Dorsolateral prefrontal cortex (tissue), 120 donors: ENCODE measurements at regions of chr18 and their contacts with region 1.

Region 1: DNA sequence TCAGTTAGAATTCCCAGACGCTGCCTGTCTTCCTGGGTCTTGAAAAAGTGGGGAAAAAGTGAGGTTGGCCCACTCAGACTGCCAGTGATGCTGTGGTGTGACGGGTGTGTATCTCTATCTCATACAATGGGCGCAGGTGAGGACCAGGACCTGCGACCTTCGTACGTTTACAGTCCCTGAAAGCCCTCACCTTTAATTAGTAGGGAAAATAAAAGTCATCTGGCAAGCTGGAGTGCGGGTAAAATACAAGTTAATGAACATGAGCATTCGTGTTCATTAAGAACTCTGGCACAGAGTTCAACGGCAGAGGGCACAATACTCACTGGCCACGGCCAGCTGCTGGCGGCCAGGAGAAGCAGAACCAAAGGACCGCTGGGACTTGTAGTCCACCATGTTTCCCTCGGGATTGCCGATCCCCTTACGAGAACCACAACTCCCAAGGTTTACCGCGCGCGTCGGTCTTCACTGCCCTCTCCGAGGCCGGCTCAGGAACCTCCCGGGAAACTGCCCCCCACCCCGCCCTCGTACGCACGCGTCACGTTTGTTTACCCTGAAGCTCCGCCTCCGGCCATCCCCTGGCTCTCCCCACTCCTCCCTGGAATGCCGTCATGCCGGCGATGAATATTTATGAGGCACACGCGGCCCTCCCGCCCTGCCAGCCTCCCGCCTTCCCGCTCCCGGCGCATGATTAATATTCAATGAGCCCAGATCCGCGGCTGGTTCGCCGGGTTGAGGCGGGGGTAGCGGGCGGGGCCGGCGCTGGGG is 488 bp upstream of the PHLPP1 start:
- DNase-seq: peak; percentile 99 to 100 (median 100)
- H3K4me3 ChIP-seq: peak overlapping the region; percentile 39 to 91 (median 72)
- H3K27ac ChIP-seq: peak overlapping the region; percentile 77 to 98 (median 93)
- H3K27me3 ChIP-seq: no peaks in the 10 kb centered on the region
- CTCF ChIP-seq: peak; percentile 71 to 98 (median 90)

Region 2: GRCh38 chr18:62186774-62187542 is 527.9 kb before region 1 on chr18 and contains the starts of genes PIGN and RELCH:
- intact Hi-C with region 1: loop called in 1 of 2 experiments (anchors 10 kb)
- DNase-seq: peak; percentile 82 to 98 (median 96)
- H3K4me3 ChIP-seq: peak within 1 kb of the TSS; percentile 67 to 100 (median 95)
- H3K27ac ChIP-seq: peak within 1 kb of the TSS in 58 of 59 donors; percentile 10 to 94 (median 84)
- H3K27me3 ChIP-seq: no peaks in the 10 kb centered on the region
- CTCF ChIP-seq: peak in 15 of 56 donors; percentile 4 to 33 (median 13)
- total RNA-seq, gene PIGN: 21.1 to 43.5 (median 31.0) TPM
- total RNA-seq, gene RELCH: 44.0 to 88.4 (median 63.7) TPM

Region 3: DNA sequence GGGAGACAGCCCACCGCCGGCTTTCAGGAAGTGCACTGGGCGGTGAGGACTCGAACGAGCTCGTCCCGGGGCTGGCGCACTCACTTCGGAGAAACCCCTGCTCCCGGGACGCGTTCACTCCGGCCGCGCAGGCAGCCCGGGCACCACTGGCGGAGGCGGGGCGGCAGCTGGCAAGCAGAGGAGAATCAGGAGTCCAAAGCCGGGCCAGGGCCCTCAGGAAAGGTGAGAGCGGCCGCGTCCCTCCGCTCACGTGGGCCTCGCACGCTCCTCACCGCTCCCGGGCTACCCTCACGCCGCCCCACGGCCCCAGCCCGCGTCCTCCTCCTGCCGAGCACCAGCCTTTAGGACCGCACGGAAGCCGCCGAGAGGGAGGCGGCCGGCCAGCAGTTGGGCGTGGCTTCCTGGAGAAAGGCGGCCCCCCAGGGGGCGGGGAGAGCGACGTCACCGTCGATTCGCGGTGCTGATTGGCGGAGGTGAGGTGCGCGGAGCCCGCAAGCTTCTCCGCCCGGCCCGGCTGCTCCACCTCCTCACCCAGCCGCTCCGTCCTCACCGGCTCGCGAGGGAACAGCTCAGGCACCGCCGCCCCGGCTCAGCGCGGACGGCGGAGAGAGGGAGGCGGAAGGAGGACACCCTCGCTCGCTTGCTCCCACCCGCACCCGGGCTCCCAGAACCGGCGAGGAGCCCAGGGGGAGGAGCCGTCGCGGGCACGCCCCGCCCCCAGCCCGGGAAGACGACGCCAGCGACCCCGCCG is 192.2 kb before region 1 on chr18 and contains the start of gene ZCCHC2:
- intact Hi-C with region 1: loop called (anchors 2 kb)
- DNase-seq: peak; percentile 96 to 100 (median 98)
- H3K4me3 ChIP-seq: peak within 1 kb of the TSS; percentile 70 to 98 (median 94)
- H3K27ac ChIP-seq: peak within 1 kb of the TSS; percentile 91 to 100 (median 98)
- H3K27me3 ChIP-seq: no peaks in the 10 kb centered on the region
- CTCF ChIP-seq: peak in 24 of 56 donors; percentile 0 to 53 (median 22)
- total RNA-seq, gene ZCCHC2: 26.3 to 65.9 (median 38.4) TPM

Region 4: GRCh38 chr18:62690236-62690815 is 24.5 kb before region 1 on chr18:
- intact Hi-C with region 1: loop called in 1 of 2 experiments (anchors 1 kb)
- DNase-seq: peak in 9 of 10 donors; percentile 61 to 91 (median 79)
- H3K4me3 ChIP-seq: peak overlapping the region in 49 of 59 donors; percentile 2 to 60 (median 31)
- H3K27ac ChIP-seq: peak overlapping the region; percentile 72 to 100 (median 96)
- H3K27me3 ChIP-seq: no peaks in the 10 kb centered on the region
- CTCF ChIP-seq: peak in 3 of 56 donors; percentile 11 to 22 (median 15)

Region 5: DNA sequence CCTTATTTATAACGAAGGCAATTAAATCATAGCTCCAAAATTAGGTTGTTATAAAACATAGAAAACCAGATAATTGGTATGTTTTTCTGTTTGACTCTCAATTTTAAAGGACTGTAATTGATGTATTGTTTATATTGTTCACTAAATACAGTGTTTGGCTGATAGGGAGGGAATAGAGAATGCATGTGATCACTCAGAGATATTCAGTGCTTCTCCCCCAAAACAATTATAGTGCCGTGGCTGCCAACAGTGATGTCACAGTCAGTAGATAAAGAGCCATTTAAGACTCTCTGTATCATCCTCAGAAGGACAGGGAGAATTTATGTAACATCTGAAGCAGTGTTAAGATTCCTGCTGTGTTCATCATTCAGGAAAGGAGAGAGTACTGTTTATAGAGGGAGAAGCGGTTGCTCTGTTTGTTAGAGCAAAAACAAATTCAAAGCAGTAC is 70.1 kb after region 1 on chr18:
- intact Hi-C with region 1: loop called in 1 of 2 experiments (anchors 1 kb)
- DNase-seq: peak in 5 of 10 donors; percentile 60 to 79 (median 67)
- H3K4me3 ChIP-seq: peak overlapping the region in 54 of 59 donors; percentile 1 to 58 (median 27)
- H3K27ac ChIP-seq: peak overlapping the region; percentile 70 to 97 (median 90)
- H3K27me3 ChIP-seq: no peaks in the 10 kb centered on the region
- CTCF ChIP-seq: no peak

Region 6: DNA sequence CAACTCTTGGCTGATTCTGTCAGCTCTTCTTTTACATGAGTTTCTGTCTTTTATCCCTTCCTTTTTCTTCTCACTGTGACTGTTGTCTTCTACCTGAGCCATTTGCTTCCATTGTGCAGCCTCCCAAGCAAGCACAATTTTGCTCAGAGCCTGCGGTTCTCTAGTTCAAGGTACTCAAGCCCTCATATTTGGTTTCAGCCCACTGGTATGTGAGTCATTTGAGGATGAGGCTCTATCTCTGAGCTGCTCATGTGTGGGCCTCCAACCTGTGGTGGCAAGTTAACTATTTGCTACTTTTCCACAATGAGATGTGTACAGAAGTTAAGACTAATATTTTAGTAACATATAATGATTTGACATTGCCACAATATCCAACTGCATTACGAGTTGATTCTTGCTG is 183.5 kb after region 1 on chr18:
- intact Hi-C with region 1: loop called in 1 of 2 experiments (anchors 5 kb)
- DNase-seq: no peak
- H3K4me3 ChIP-seq: no peak overlapping the region
- H3K27ac ChIP-seq: peak overlapping the region in 35 of 59 donors; percentile 3 to 97 (median 38)
- H3K27me3 ChIP-seq: no peaks in the 10 kb centered on the region
- CTCF ChIP-seq: no peak

Region 7: DNA sequence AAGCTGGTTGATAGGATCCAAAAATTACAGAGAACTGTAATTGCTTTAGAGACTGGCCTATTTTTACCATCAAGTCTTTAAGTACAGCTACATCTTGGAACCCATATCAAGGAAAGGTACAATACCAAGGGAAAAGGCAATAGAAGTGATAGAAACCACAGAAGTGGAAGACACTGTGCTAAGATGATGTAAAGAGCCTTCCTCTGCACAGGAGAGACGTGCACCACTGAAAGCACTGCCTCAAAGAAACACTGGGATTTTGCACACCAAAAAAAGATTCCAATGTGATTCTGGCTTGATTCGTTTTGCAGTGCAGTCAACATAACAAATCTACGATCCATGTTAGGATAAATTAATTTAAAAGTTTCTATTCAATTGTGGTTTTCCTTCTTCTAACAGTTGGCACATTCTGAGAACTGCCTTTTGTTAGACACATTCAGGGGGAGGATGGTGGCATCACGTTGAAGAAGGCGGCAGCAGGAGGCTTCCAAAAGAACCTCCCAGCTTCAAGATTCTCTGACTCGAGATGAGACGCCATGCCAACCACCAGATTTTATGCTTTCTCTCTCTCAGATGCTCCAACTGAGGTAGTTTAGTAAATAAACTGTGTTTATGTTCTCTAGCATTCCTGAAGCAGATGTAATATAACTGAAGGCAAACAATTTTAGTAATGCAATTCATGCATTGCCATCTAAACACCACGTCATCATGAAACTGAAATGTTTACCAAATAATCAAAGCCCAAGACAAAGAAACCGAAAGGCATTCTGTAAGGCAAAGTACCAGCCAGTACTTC is 501.9 kb after region 1 on chr18:
- intact Hi-C with region 1: no loop called
- DNase-seq: no peak
- H3K4me3 ChIP-seq: peak overlapping the region in 22 of 59 donors; percentile 2 to 49 (median 12)
- H3K27ac ChIP-seq: peak overlapping the region in 51 of 59 donors; percentile 2 to 84 (median 56)
- H3K27me3 ChIP-seq: no peaks in the 10 kb centered on the region
- CTCF ChIP-seq: no peak